ENCODE measurements at regions of chr3 and their contacts with region 1.

Region 1: DNA sequence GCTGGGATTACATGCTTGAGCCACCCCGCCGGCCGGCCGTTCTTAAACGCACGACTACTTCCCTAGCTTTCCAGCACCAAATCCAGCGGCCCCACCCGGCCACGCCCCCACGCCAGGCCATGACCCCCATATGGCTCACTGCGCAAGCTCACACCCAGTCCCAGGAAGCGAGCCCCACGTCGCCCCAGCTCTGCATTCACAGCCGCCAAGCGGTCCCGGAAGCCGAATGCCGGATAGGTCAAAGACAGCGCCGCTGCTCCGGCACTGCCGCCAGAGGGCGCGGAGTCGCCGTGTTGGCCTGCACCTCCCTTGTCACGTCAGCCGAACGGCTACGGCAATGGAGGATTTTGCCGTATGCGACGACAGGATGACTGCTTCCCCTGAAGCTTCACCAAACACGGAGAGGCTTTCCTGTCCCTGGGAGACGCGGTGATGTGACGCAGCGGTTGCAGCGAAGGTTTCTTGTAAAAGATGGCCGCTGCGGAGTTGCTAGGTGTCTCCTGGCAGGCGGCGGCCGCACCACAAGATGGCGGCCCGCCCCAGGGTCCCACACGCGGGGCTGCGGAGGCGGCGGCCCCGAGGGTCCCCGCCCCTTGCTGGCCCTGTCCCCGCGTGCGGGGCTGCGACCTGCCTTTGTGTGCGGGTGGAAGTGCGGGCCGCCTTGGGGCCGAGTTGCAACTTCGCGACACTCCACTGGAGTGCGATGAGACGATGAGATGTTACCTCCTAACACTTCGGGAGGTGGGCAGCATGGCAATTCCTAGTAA is 30.2 kb upstream of the RPN1 start:
- DNase-seq: peak; percentile 98
- ATAC-seq: peak; percentile 94
- H3K4me3 ChIP-seq: peak overlapping the region; percentile 67 to 89 (median 74)
- H3K4me3 Mint-ChIP-seq: peak overlapping the region; percentile 98
- H3K27ac ChIP-seq: peak overlapping the region; percentile 93 to 95
- H3K27ac Mint-ChIP-seq: peak overlapping the region; percentile 99
- H3K4me1 ChIP-seq: peaks cover 20 to 32% of the 10 kb centered on the region in 2 donors
- H3K4me1 Mint-ChIP-seq: peaks cover 21% of the 10 kb centered on the region
- H3K27me3 ChIP-seq: no peaks in the 10 kb centered on the region
- H3K27me3 Mint-ChIP-seq: no peaks in the 10 kb centered on the region
- CTCF ChIP-seq: peak; percentile 94

Region 2: DNA sequence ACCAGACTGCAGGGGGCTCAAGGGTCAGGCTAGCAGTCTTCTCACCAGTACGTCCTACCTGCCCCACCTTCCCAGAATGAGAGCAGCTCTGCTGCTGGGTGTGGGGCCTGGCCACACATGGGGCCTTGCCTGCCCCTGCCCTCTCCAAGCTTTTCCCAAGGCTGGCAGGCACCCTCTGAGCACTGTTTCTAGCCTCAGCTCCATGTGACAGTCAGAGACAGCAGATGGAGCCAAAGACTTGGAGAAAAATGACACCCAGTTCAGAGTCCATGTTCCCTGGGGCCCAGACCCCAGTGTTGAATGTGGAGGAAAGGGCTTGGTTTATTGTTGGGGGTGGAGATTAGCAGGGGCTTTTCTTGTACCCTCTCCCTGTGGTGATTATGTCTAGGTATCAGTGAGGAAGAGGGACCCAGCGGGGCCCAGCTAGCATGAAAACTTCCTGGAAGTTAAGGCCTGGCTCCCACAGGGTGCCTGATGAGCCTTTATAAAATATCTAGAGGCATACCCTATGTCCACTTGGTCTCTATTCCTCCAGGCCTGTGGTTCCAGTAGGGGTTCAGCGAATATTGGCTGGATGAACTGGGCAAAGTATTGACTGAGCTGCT is 373.7 kb before region 1 on chr3:
- CTCF ChIA-PET with region 1: no interaction called
- POLR2A ChIA-PET with region 1: no interaction called
- intact Hi-C with region 1: no loop called
- DNase-seq: no peak
- ATAC-seq: no peak
- H3K4me3 ChIP-seq: no peak overlapping the region
- H3K4me3 Mint-ChIP-seq: no peak overlapping the region
- H3K27ac ChIP-seq: no peak overlapping the region
- H3K27ac Mint-ChIP-seq: no peak overlapping the region
- H3K4me1 ChIP-seq: no peaks in the 10 kb centered on the region
- H3K4me1 Mint-ChIP-seq: no peaks in the 10 kb centered on the region
- H3K27me3 ChIP-seq: no peaks in the 10 kb centered on the region
- H3K27me3 Mint-ChIP-seq: no peaks in the 10 kb centered on the region
- CTCF ChIP-seq: no peak

Region 3: GRCh38 chr3:128408693-128409623 is 271.8 kb before region 1 on chr3:
- CTCF ChIA-PET with region 1: no interaction called
- POLR2A ChIA-PET with region 1: no interaction called
- intact Hi-C with region 1: no loop called
- DNase-seq: no peak
- ATAC-seq: no peak
- H3K4me3 ChIP-seq: no peak overlapping the region
- H3K4me3 Mint-ChIP-seq: no peak overlapping the region
- H3K27ac ChIP-seq: no peak overlapping the region
- H3K27ac Mint-ChIP-seq: no peak overlapping the region
- H3K4me1 ChIP-seq: no peaks in the 10 kb centered on the region
- H3K4me1 Mint-ChIP-seq: no peaks in the 10 kb centered on the region
- H3K27me3 ChIP-seq: no peaks in the 10 kb centered on the region
- H3K27me3 Mint-ChIP-seq: no peaks in the 10 kb centered on the region
- CTCF ChIP-seq: no peak

Region 4: DNA sequence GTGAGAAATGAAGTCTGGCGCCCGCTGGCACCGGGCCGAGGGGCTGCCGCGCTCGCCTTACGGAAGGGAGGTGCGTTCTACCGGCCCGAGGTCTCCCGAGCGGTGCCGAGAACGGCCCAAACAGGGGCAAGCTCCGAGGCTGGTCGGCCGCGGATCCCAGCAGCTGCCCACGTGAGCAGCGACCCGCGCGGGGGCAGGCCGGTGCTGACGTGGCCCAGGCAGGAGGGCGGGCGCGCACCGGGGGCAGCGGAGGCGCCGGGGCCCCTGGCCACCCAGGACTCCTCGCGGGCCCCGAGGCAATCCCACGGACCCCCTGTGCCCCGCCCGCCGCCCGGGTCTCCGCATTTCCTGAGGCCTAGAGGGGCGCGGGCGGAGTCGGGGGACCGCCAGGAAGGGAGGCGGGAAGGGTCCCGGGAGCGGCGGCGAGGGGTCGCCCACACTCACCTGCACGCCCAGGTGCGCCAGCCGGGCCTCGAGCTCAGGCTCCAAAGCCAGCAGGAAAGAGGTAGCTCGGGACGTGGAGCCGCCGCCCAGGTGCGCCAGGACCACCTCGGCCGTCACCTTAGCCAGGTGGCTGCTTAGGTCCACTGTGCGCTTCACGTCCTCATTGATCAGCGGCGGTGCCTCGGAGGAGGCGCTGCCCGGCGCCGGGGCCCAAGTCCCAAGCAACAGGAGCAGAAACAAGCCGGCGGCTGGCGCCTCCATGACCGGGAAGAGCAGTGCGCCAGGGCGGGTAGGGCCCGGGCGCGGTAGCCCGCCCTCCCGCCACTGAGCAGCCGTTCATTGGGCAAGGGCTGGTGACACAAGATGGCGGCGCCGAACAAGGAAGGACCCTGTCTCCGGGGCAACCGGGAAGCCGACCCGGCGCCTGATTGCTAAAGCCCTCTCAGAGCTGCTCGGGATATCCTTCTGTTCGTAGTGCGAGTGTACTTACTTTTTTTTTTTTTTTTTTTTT is 30.4 kb before region 1 on chr3 and contains the start of gene RPN1:
- CTCF ChIA-PET with region 1: interaction called, 10 read pairs
- POLR2A ChIA-PET with region 1: interaction called, 15 read pairs
- intact Hi-C with region 1: loop called (anchors 1 kb)
- DNase-seq: peak; percentile 96
- ATAC-seq: peak; percentile 97
- H3K4me3 ChIP-seq: peak within 1 kb of the TSS; percentile 74 to 100 (median 90)
- H3K4me3 Mint-ChIP-seq: peak within 1 kb of the TSS; percentile 89
- H3K27ac ChIP-seq: peak within 1 kb of the TSS; percentile 89 to 98
- H3K27ac Mint-ChIP-seq: peak within 1 kb of the TSS; percentile 91
- H3K4me1 ChIP-seq: peaks cover 15 to 25% of the 10 kb centered on the region in 2 donors
- H3K4me1 Mint-ChIP-seq: peaks cover 31% of the 10 kb centered on the region
- H3K27me3 ChIP-seq: no peaks in the 10 kb centered on the region
- H3K27me3 Mint-ChIP-seq: no peaks in the 10 kb centered on the region
- CTCF ChIP-seq: no peak
- total RNA-seq, gene RPN1: 80.6 and 83.2 TPM in 2 replicates

Region 5: GRCh38 chr3:128725932-128726690 is 45.3 kb after region 1 on chr3 and contains the start of gene RAB7A:
- CTCF ChIA-PET with region 1: interaction called, 17 read pairs
- POLR2A ChIA-PET with region 1: interaction called, 19 read pairs
- intact Hi-C with region 1: loop called (anchors 1 kb)
- DNase-seq: peak; percentile 99
- ATAC-seq: peak; percentile 96
- H3K4me3 ChIP-seq: peak within 1 kb of the TSS; percentile 79 to 98 (median 93)
- H3K4me3 Mint-ChIP-seq: peak within 1 kb of the TSS; percentile 99
- H3K27ac ChIP-seq: peak within 1 kb of the TSS; percentile 92 to 99
- H3K27ac Mint-ChIP-seq: peak within 1 kb of the TSS; percentile 100
- H3K4me1 ChIP-seq: peaks cover 45 to 46% of the 10 kb centered on the region in 2 donors
- H3K4me1 Mint-ChIP-seq: peaks cover 52% of the 10 kb centered on the region
- H3K27me3 ChIP-seq: no peaks in the 10 kb centered on the region
- H3K27me3 Mint-ChIP-seq: peaks cover 7% of the 10 kb centered on the region
- CTCF ChIP-seq: no peak
- total RNA-seq, gene RAB7A: 138 and 144 TPM in 2 replicates

Region 6: DNA sequence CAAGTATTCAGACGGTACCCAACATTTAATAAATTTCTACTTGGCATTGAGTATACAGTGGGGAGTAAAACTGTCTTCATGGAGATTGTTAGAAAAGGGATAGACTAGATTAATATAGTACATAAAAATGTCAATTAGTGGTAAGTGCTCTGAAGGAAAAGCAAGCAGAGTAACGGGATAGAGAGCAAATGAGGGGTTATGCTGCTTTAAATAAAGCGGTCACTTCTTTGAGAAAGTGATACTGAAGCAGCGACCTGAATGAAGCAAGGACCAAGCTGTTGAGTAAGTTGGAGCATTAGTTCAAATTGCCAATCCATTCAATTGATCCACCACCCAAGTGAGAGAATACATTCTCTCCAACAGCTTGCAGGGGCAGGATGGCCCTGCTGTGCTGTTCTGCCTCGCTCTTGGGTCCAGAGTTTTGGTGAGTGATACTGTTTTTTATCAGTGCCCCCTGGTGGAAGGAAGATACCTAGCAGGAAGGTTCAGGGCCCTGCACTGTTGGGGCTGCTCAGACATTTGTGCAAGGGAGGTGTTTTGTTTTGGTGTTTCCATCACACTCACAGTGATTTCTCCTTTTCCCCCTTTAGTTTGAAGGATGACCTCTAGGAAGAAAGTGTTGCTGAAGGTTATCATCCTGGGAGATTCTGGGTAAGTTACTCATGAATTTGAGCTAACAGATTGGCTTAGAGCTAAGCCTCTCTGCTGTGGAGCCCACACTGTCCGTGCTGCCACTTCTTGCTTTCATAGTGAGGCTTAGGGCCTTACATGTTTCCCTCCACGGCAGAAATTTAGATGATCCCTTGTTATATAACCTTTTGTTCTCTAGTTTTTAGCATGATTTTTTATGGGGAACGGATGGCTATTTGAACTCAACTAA is 114.2 kb after region 1 on chr3:
- CTCF ChIA-PET with region 1: interaction called, 85 read pairs
- POLR2A ChIA-PET with region 1: no interaction called
- intact Hi-C with region 1: loop called (anchors 1 kb)
- DNase-seq: peak; percentile 81
- ATAC-seq: peak; percentile 99
- H3K4me3 ChIP-seq: no peak overlapping the region
- H3K4me3 Mint-ChIP-seq: no peak overlapping the region
- H3K27ac ChIP-seq: no peak overlapping the region
- H3K27ac Mint-ChIP-seq: peak overlapping the region; percentile 32
- H3K4me1 ChIP-seq: peaks cover 17 to 22% of the 10 kb centered on the region in 2 donors
- H3K4me1 Mint-ChIP-seq: peaks cover 49% of the 10 kb centered on the region
- H3K27me3 ChIP-seq: no peaks in the 10 kb centered on the region
- H3K27me3 Mint-ChIP-seq: no peaks in the 10 kb centered on the region
- CTCF ChIP-seq: peak; percentile 80

Region 7: DNA sequence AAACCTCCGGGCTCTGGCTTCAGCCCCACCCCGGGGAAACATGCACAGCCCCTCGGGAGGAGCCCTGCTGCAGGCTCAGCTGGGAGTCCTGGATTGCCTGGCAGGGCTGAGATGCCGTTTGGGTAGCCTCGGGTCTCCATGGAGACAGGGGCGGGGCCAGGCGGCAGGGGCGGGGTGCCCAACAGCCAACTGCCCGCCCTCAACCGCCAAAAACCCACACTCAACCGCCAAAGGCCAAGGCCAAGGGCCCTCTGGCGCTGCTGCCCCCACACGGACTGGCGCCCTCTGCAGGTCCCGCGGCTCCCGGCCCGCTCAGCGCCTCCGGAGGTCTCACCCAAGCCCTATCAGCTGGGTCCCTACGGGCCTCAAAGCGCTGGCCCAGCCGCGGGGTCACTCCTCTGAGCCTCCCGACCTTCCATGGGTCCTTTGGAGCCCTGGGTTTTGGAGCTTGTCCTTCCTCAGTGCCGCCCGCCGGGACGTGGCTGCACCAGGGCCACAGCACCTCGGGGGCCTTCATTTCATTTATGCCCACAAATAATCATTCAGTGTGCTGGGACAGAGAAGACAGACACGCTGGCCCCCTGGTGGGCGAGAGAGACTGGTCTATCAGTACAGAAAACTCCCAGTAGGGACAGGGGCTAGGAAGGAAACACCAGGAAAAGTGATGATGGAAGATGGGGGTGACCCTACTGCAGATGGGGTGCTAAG is 165.1 kb after region 1 on chr3:
- CTCF ChIA-PET with region 1: interaction called, 30 read pairs
- POLR2A ChIA-PET with region 1: interaction called, 3 read pairs
- intact Hi-C with region 1: loop called (anchors 1 kb)
- DNase-seq: peak; percentile 82
- ATAC-seq: peak; percentile 86
- H3K4me3 ChIP-seq: peak overlapping the region in 4 of 5 experiments; percentile 45 to 70 (median 58)
- H3K4me3 Mint-ChIP-seq: peak overlapping the region; percentile 85
- H3K27ac ChIP-seq: peak overlapping the region in 1 of 2 donors; percentile 52
- H3K27ac Mint-ChIP-seq: peak overlapping the region; percentile 56
- H3K4me1 ChIP-seq: peaks cover 11 to 17% of the 10 kb centered on the region in 2 donors
- H3K4me1 Mint-ChIP-seq: peaks cover 11% of the 10 kb centered on the region
- H3K27me3 ChIP-seq: no peaks in the 10 kb centered on the region
- H3K27me3 Mint-ChIP-seq: no peaks in the 10 kb centered on the region
- CTCF ChIP-seq: peak; percentile 85

Region 8: GRCh38 chr3:130073582-130073981 is 1392.8 kb after region 1 on chr3:
- CTCF ChIA-PET with region 1: no interaction called
- POLR2A ChIA-PET with region 1: no interaction called
- intact Hi-C with region 1: no loop called
- DNase-seq: no peak
- ATAC-seq: no peak
- H3K4me3 ChIP-seq: no peak overlapping the region
- H3K4me3 Mint-ChIP-seq: no peak overlapping the region
- H3K27ac ChIP-seq: no peak overlapping the region
- H3K27ac Mint-ChIP-seq: no peak overlapping the region
- H3K4me1 ChIP-seq: no peaks in the 10 kb centered on the region
- H3K4me1 Mint-ChIP-seq: no peaks in the 10 kb centered on the region
- H3K27me3 ChIP-seq: no peaks in the 10 kb centered on the region
- H3K27me3 Mint-ChIP-seq: peaks cover 10% of the 10 kb centered on the region
- CTCF ChIP-seq: no peak

Measured in B cell (primary cell).